Heart right ventricle (tissue), 16 donors: ENCODE measurements at regions of chr2 and their contacts with region 1.

Region 1: GRCh38 chr2:84925724-84926376 is 20.4 kb downstream of the TMSB10 start:
- DNase-seq: peak; percentile 96 to 97
- ATAC-seq: peak; percentile 79 to 91 (median 86)
- H3K4me3 ChIP-seq: peak overlapping the region in 9 of 10 donors; percentile 4 to 52 (median 44)
- H3K27ac ChIP-seq: peak overlapping the region in 9 of 10 donors; percentile 29 to 91 (median 83)
- H3K4me1 ChIP-seq: peaks cover 6 to 38% (median 23%) of the 10 kb centered on the region in 9 donors
- H3K27me3 ChIP-seq: no peaks in the 10 kb centered on the region
- CTCF ChIP-seq: peak; percentile 95 to 100 (median 99)

Region 2: DNA sequence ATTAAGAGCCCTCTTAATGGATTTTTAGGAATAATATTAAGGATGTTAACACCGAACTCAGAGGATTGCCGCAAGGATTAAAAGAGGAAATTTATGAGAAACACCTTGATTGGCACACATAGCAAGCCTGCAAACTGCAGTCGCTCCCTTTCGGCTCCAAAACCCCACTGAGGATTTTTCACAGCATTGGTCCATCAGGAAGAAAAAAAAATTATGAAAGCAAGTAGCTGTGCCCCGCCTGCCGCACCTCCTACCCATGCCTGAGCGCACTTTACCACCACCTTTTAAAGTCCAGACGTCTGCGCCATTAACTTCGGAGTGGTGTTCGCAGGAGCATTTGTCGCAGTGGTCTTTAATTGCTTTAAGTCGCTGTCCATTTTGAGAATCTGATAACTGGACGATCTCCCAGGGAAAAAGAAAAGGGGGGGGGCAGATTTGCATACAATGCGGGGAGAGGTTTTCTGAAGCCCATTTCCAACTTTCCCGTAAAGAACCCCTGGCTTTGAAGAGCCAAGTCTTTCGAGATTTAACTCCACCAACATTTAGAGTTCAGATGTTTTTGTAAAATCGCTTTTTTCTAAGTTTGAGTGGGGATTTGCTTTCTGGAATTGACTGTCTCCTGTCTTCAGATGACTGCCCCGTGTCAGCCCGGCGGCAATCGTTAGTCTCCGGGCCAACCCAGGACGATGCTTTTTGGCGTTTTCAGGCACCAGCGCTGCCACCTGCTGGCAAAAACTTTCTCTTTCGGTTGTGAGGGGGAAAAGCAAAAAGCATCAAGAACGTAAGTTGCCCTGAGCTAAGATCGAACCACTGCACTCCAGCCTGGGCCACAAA is 44.1 kb before region 1 on chr2:
- intact Hi-C with region 1: loop called in 3 of 10 experiments (anchors 5 kb)
- DNase-seq: peak; percentile 74 to 83
- ATAC-seq: peak; percentile 68 to 92 (median 85)
- H3K4me3 ChIP-seq: peak overlapping the region; percentile 27 to 69 (median 55)
- H3K27ac ChIP-seq: peak overlapping the region in 1 of 10 donors; percentile 71
- H3K4me1 ChIP-seq: peaks cover 8 to 30% (median 20%) of the 10 kb centered on the region in 9 donors
- H3K27me3 ChIP-seq: peaks cover 5 to 55% (median 26%) of the 10 kb centered on the region in 7 donors
- CTCF ChIP-seq: peak; percentile 47 to 84 (median 70)

Region 3: GRCh38 chr2:84905181-84906107 is 20.4 kb before region 1 on chr2 and contains the start of gene TMSB10:
- intact Hi-C with region 1: loop called in 5 of 10 experiments (anchors 1 to 2 kb)
- DNase-seq: peak; percentile 91 to 92
- ATAC-seq: peak; percentile 78 to 93 (median 86)
- H3K4me3 ChIP-seq: peak within 1 kb of the TSS; percentile 62 to 98 (median 90)
- H3K27ac ChIP-seq: peak within 1 kb of the TSS; percentile 92 to 99 (median 97)
- H3K4me1 ChIP-seq: peaks cover 0 to 46% (median 8%) of the 10 kb centered on the region in 9 donors
- H3K27me3 ChIP-seq: no peaks in the 10 kb centered on the region
- CTCF ChIP-seq: peak in 5 of 9 donors; percentile 17 to 56 (median 26)
- total RNA-seq, gene TMSB10: 217 to 1,060 (median 297) TPM

Region 4: GRCh38 chr2:85011747-85012146 is 85.9 kb after region 1 on chr2:
- intact Hi-C with region 1: loop called in 3 of 10 experiments (anchors 1 to 5 kb)
- DNase-seq: no peak
- ATAC-seq: no peak
- H3K4me3 ChIP-seq: no peak overlapping the region
- H3K27ac ChIP-seq: no peak overlapping the region
- H3K4me1 ChIP-seq: peaks cover 0 to 81% (median 65%) of the 10 kb centered on the region in 9 donors
- H3K27me3 ChIP-seq: no peaks in the 10 kb centered on the region
- CTCF ChIP-seq: peak in 1 of 9 donors; percentile 5

Region 5: DNA sequence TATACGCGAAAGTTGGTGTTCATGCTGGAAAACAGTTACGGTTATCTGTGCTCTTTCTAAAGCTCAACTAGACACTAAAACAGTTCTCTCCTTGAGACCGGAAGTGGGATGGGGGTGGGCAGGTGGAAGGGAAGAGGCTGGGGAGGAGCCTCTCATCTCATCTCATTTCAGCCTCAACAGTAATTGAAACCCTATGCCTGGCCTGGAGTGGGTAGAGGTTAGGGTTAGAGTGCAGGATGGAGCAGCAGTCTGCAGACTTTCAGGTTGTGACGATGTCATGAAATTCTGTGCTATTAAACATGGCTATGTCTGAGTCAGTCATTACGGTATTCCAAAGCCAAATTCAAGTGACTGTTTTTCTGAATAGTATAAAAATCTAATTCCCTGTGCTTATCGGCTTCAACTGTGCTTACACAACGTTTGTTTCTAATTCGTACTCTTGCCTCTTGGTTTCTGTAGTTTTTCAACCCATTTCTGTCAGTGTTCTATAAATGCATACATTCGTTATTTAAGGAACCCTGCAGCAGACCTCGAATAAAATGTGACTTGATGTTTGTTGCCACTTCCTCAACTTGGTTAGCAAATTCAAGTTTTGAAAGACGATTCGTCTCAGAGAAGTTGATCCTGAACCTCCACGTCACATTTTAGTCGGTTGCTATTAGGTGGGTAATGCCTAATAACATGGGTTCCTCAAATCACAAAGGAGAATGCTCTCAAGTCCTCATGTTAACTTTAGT is 131.5 kb after region 1 on chr2:
- intact Hi-C with region 1: no loop called
- DNase-seq: no peak
- ATAC-seq: peak in 3 of 8 donors; percentile 14 to 38 (median 35)
- H3K4me3 ChIP-seq: no peak overlapping the region
- H3K27ac ChIP-seq: no peak overlapping the region
- H3K4me1 ChIP-seq: peaks cover 0 to 37% (median 0%) of the 10 kb centered on the region in 9 donors
- H3K27me3 ChIP-seq: no peaks in the 10 kb centered on the region
- CTCF ChIP-seq: no peak

Region 6: DNA sequence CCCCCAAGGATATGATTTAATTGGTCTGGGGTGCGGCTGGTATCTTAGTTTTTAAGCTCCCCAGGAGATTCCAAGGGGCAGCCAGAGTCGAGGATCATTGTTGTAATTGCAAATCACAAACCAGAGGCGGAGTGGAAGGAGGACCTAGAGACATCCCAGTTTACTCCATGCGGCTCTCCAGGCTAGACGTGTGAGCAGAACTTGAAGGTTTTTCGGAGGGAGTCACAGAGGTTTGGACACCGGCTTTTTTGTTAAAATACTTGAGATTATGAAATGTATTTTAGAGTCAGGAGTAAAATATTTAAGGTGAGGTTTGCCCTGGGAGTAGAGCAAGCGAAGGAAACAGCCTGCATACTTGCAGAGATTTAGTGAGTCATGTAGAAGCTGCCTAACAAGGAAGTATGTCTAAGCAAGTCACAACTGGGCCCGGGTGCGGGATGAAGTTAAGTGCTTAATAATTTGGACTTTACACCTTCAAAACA is 362.4 kb after region 1 on chr2:
- intact Hi-C with region 1: loop called in 2 of 10 experiments (anchors 10 kb)
- DNase-seq: no peak
- ATAC-seq: no peak
- H3K4me3 ChIP-seq: no peak overlapping the region
- H3K27ac ChIP-seq: no peak overlapping the region
- H3K4me1 ChIP-seq: peaks cover 0 to 18% (median 12%) of the 10 kb centered on the region in 9 donors
- H3K27me3 ChIP-seq: no peaks in the 10 kb centered on the region
- CTCF ChIP-seq: no peak